ENCODE measurements at regions of chr7 and their contacts with region 1.

Region 1: DNA sequence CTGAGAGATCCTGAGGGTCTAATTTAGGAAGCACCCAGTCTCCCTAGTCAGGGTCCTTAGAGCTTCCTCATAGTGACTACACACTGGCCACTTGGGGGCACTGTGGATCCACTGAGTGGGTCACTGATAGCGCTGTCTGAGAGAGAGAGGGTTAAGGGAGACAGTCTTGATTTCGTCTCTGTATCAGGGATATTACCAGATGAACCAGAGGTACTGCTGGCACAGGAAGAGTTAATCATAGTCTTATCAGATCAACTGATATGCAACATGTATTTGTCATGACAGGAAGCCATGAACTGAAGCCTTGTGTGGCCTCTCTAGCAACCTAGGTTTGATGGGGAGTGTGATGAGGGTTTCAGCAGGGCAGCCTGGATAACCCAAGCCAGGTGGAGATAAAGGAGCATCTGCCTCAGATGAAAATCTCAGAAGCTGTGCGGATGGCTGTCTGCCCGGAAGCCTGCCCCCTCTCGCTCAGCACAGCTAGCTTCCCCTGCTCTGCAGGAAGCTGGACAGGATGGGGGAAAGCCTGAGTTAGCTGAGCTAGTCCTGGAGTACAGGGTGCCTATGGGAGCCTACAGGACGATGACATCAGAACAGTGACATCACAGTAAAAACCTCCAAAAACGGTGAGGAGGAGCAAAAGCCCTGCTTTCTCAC is 214.0 kb upstream of the PRSS1 start:
- DNase-seq: no peak
- ATAC-seq: peak; percentile 80
- H3K4me3 Mint-ChIP-seq: peak overlapping the region; percentile 33
- H3K27ac Mint-ChIP-seq: no peak overlapping the region
- H3K4me1 Mint-ChIP-seq: peaks cover 12% of the 10 kb centered on the region
- H3K27me3 Mint-ChIP-seq: peaks cover 4% of the 10 kb centered on the region
- CTCF ChIP-seq: no peak

Region 2: DNA sequence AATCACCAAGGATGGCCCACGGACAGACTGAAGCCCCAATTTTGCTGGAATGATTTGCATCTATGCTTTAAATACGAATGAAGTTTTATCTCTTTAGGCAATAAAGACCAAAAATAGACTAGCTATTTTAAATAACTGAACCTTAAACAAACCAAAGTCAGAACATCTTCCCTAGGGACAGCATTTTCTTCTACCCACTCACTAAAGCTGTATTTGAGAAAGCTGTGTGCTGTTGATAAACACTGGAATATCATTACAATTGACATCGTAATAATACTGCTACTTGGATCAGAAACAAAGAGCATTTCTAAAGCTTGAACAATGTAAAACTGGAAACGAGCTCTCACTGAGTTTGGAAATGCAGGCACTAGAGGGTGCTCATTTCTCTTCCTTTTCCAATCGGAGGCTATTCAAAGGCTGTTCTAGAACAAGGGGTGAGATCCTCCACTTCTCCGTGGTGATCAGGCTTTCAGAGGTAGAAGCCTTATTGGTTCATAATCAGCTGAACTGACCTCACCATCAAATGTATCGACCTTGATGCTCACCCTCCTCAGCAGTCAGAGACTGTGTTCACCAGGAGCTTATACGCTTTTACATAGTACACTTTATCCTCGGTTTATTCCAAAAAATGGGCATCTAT is 11.3 kb before region 1 on chr7:
- CTCF ChIA-PET with region 1: interaction called, 12 read pairs
- POLR2A ChIA-PET with region 1: no interaction called
- intact Hi-C with region 1: no loop called
- DNase-seq: no peak
- ATAC-seq: no peak
- H3K4me3 Mint-ChIP-seq: no peak overlapping the region
- H3K27ac Mint-ChIP-seq: no peak overlapping the region
- H3K4me1 Mint-ChIP-seq: no peaks in the 10 kb centered on the region
- H3K27me3 Mint-ChIP-seq: peaks cover 23% of the 10 kb centered on the region
- CTCF ChIP-seq: no peak

Region 3: DNA sequence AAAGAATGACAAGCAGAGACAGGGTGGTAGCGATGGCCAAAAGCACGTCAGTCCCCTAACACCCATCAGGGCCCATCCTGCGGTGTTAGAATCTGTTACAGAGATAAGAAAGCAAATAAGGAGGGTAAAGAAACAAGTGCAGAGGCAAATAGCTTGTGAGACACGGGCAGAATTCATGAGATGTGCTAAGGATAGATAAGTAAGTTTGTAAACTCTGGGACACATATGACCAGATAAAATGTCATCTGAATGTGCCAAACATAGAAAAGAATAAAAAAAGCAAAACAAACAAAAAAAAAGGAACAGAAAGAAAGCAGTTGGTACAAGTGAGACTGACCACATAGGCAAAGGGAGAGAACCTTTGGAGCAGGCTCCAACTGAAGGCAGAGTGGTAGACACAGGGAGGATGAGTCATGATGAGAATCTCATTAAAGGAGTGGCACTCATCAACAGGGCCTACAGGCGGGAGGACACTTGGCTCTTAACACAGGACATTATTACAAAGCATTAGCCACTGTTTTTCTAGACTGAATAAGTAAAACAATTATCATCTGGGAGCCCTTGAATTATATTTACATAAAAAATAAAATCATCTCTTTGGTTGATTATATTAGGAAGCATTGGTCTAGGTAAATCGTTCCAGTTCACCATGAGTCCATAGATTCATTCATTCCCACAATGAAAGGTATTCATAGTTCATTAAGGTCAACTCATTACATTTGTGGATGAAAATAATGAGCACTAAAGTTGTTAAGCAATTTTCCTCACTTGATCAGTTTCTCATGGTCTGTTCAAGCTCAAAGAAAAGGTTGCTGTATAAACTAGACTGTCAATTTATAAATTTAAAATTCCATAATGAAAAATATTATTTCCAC is 298.2 kb after region 1 on chr7:
- CTCF ChIA-PET with region 1: no interaction called
- POLR2A ChIA-PET with region 1: no interaction called
- intact Hi-C with region 1: loop called (anchors 5 kb)
- DNase-seq: no peak
- ATAC-seq: no peak
- H3K4me3 Mint-ChIP-seq: no peak overlapping the region
- H3K27ac Mint-ChIP-seq: no peak overlapping the region
- H3K4me1 Mint-ChIP-seq: peaks cover 20% of the 10 kb centered on the region
- H3K27me3 Mint-ChIP-seq: no peaks in the 10 kb centered on the region
- CTCF ChIP-seq: no peak

Region 4: GRCh38 chr7:143054621-143055020 is 519.4 kb after region 1 on chr7:
- CTCF ChIA-PET with region 1: no interaction called
- POLR2A ChIA-PET with region 1: no interaction called
- intact Hi-C with region 1: no loop called
- DNase-seq: no peak
- ATAC-seq: no peak
- H3K4me3 Mint-ChIP-seq: no peak overlapping the region
- H3K27ac Mint-ChIP-seq: no peak overlapping the region
- H3K4me1 Mint-ChIP-seq: peaks cover 12% of the 10 kb centered on the region
- H3K27me3 Mint-ChIP-seq: no peaks in the 10 kb centered on the region
- CTCF ChIP-seq: no peak

Measured in activated B cell treated with CpG ODN at 0.5 μM for 24 hours (primary cell).